Panc1 (cell line): ENCODE measurements at regions of chr1 and their contacts with region 1.

Region 1: GRCh38 chr1:43529206-43529731 is 1.4 kb upstream of the PTPRF start:
- DNase-seq: peak; percentile 71
- ATAC-seq: peak; percentile 79
- H3K4me3 ChIP-seq: no peak overlapping the region
- H3K27ac ChIP-seq: no peak overlapping the region
- H3K4me1 ChIP-seq: peaks cover 17% of the 10 kb centered on the region
- H3K27me3 ChIP-seq: no peaks in the 10 kb centered on the region
- CTCF ChIP-seq: peak; percentile 95

Region 2: GRCh38 chr1:43650310-43651085 is 121.2 kb after region 1 on chr1:
- CTCF ChIA-PET with region 1: interaction called, 5 read pairs
- POLR2A ChIA-PET with region 1: no interaction called
- in situ Hi-C with region 1: no loop called
- intact Hi-C with region 1: loop called (anchors 5 kb)
- DNase-seq: peak; percentile 87
- ATAC-seq: peak; percentile 90
- H3K4me3 ChIP-seq: peak overlapping the region; percentile 96 to 100
- H3K27ac ChIP-seq: peak overlapping the region; percentile 87
- H3K4me1 ChIP-seq: peaks cover 20% of the 10 kb centered on the region
- H3K27me3 ChIP-seq: no peaks in the 10 kb centered on the region
- CTCF ChIP-seq: no peak

Region 3: GRCh38 chr1:43908863-43909262 is 379.6 kb after region 1 on chr1:
- CTCF ChIA-PET with region 1: interaction called, 10 read pairs
- POLR2A ChIA-PET with region 1: no interaction called
- in situ Hi-C with region 1: no loop called
- intact Hi-C with region 1: no loop called
- DNase-seq: no peak
- ATAC-seq: no peak
- H3K4me3 ChIP-seq: no peak overlapping the region
- H3K27ac ChIP-seq: no peak overlapping the region
- H3K4me1 ChIP-seq: no peaks in the 10 kb centered on the region
- H3K27me3 ChIP-seq: no peaks in the 10 kb centered on the region
- CTCF ChIP-seq: no peak

Region 4: DNA sequence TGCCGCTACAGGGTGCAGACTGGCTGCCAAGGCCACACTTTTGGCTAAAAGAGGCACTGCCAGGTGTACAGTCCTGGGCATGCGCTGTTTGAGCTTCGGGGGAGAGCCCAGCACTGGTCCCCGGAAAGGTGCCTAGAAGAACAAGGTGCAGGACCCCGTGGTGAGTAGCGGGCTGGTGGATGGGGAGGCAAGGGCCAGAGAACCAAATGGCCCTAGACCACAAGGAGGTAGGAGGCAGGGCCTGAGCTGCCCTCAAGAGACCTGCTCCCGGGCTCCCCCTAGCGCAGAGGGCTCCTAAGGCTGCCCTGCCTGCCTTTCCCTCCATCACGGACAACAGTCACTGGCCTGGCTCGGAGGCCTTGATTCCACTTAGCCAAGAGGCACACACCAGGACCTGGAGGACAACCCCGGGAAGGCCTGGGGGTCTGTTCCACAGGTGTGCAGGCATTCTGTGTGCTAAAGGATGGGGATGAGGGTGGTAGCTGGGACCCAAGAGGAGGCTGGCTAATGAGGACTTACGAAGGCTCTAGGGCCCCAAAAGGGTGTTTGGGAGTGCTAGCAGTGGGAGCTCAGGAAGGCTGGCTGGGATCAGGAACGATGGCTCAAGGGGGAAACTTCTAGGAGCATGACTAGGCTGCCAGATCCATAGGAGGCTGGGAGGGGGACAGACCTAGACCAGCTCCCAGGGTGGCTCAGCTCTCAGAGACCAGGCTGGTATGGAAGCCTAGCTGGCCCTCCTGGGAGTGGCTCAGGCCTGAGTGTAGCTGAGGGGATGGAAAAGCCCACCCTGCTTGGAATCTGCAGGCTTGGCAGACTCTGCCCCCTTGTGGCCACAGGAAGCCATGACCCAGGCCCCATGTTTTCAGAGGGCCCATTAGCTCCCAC is 405.1 kb after region 1 on chr1:
- CTCF ChIA-PET with region 1: no interaction called
- POLR2A ChIA-PET with region 1: no interaction called
- in situ Hi-C with region 1: no loop called
- intact Hi-C with region 1: loop called (anchors 10 kb)
- DNase-seq: no peak
- ATAC-seq: peak; percentile 59
- H3K4me3 ChIP-seq: no peak overlapping the region
- H3K27ac ChIP-seq: peak overlapping the region; percentile 40; the same call in 1 of the 2 replicates
- H3K4me1 ChIP-seq: peaks cover 16% of the 10 kb centered on the region
- H3K27me3 ChIP-seq: no peaks in the 10 kb centered on the region
- CTCF ChIP-seq: peak; percentile 93

Region 5: GRCh38 chr1:44327679-44328491 is 798.6 kb after region 1 on chr1:
- CTCF ChIA-PET with region 1: no interaction called
- POLR2A ChIA-PET with region 1: no interaction called
- in situ Hi-C with region 1: no loop called
- intact Hi-C with region 1: no loop called
- DNase-seq: peak; percentile 99
- ATAC-seq: peak; percentile 97
- H3K4me3 ChIP-seq: no peak overlapping the region
- H3K27ac ChIP-seq: peak overlapping the region; percentile 77
- H3K4me1 ChIP-seq: peaks cover 34% of the 10 kb centered on the region
- H3K27me3 ChIP-seq: no peaks in the 10 kb centered on the region
- CTCF ChIP-seq: no peak